ENCODE measurements at regions of chr13 and their contacts with region 1.

Region 1: GRCh38 chr13:75635828-75636435 is at the start of gene LMO7:
- DNase-seq: peak; percentile 48
- ATAC-seq: peak; percentile 76
- H3K4me3 ChIP-seq: peak within 1 kb of the TSS; percentile 63 to 85 (median 84)
- H3K27ac ChIP-seq: peak within 1 kb of the TSS; percentile 24
- H3K4me1 ChIP-seq: peaks cover 36% of the 10 kb centered on the region
- H3K27me3 ChIP-seq: no peaks in the 10 kb centered on the region; a peak in 1 of 5 replicates
- CTCF ChIP-seq: no peak
- EP300 ChIP-seq: no peak
- POLR2A ChIP-seq: peak in 1 of 2 experiments; percentile 68; a peak in 2 of 4 replicates
- RAD21 ChIP-seq: no peak
- total RNA-seq, gene LMO7: 47.7 and 121 TPM in 2 replicates

Region 2: DNA sequence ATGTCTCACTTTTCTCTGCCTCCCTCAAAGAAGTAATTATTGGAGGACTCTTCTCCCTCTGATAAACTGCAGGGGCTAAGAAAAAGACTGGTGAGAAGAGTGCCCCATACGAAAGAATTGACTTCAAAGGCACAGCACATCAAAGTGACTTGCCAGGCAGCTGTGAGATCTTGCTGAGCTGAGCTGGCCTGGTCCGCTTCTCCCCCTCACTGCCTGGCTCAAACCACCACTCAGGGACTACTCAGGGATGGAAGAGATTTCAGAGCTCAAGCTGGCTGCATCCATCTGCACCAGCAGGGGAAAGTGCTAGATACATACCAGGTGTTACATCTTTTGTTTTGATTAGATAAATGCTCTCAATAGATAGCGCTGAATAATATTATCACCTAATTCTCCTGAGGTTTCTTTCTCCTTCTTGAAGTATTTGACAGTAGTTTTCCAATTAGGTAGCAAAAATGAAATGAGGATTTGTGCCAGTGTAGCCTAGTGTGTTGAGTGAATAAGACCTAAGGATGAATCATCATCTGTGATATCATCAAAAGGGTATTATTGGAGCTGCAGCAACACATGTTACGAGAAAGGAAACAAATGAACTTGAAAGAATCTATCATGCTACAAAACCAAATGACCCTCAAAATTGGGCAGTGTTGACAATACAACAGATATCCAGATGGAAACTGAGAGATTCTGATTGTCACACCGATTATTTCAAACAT is 533.8 kb before region 1 on chr13:
- CTCF ChIA-PET with region 1: no interaction called
- POLR2A ChIA-PET with region 1: no interaction called
- in situ Hi-C with region 1: no loop called
- intact Hi-C with region 1: no loop called
- DNase-seq: no peak
- ATAC-seq: no peak
- H3K4me3 ChIP-seq: no peak overlapping the region
- H3K27ac ChIP-seq: no peak overlapping the region
- H3K4me1 ChIP-seq: no peaks in the 10 kb centered on the region
- H3K27me3 ChIP-seq: no peaks in the 10 kb centered on the region
- CTCF ChIP-seq: no peak
- EP300 ChIP-seq: no peak
- POLR2A ChIP-seq: no peak
- RAD21 ChIP-seq: no peak

Region 3: GRCh38 chr13:75566658-75567057 is 69.3 kb before region 1 on chr13:
- CTCF ChIA-PET with region 1: no interaction called
- POLR2A ChIA-PET with region 1: no interaction called
- in situ Hi-C with region 1: no loop called
- intact Hi-C with region 1: loop called (anchors 5 kb)
- DNase-seq: peak; percentile 31
- ATAC-seq: no peak
- H3K4me3 ChIP-seq: no peak overlapping the region
- H3K27ac ChIP-seq: no peak overlapping the region
- H3K4me1 ChIP-seq: no peaks in the 10 kb centered on the region
- H3K27me3 ChIP-seq: no peaks in the 10 kb centered on the region
- CTCF ChIP-seq: peak; percentile 46
- EP300 ChIP-seq: no peak
- POLR2A ChIP-seq: no peak
- RAD21 ChIP-seq: no peak

Region 4: DNA sequence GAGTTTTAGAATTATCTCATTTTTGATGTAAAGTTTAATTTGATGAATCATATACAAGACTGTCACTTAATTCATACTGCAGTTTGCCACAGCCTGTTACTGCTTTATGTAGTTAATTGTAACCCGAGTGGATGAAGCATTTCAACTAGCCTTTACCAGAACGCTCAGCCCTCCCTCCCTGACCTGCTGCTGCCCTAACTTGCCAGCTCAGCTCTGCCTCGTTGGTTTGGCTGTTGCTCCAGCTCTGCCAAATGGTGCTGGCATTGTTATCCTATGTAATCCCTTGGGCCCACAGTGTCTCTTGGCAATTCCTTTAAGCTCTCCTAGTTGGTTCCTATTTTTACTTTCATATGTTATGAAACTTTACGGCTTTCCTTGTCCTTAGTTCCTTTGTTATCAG is 113.5 kb after region 1 on chr13:
- CTCF ChIA-PET with region 1: no interaction called
- POLR2A ChIA-PET with region 1: no interaction called
- in situ Hi-C with region 1: no loop called
- intact Hi-C with region 1: no loop called
- DNase-seq: no peak
- ATAC-seq: no peak
- H3K4me3 ChIP-seq: no peak overlapping the region
- H3K27ac ChIP-seq: no peak overlapping the region
- H3K4me1 ChIP-seq: peaks cover 12% of the 10 kb centered on the region
- H3K27me3 ChIP-seq: no peaks in the 10 kb centered on the region
- CTCF ChIP-seq: no peak
- EP300 ChIP-seq: no peak
- POLR2A ChIP-seq: no peak
- RAD21 ChIP-seq: no peak

Region 5: GRCh38 chr13:76764429-76764828 is 1128.5 kb after region 1 on chr13:
- CTCF ChIA-PET with region 1: no interaction called
- POLR2A ChIA-PET with region 1: no interaction called
- in situ Hi-C with region 1: no loop called
- intact Hi-C with region 1: no loop called
- DNase-seq: no peak
- ATAC-seq: no peak
- H3K4me3 ChIP-seq: no peak overlapping the region
- H3K27ac ChIP-seq: no peak overlapping the region
- H3K4me1 ChIP-seq: no peaks in the 10 kb centered on the region
- H3K27me3 ChIP-seq: no peaks in the 10 kb centered on the region
- CTCF ChIP-seq: no peak
- EP300 ChIP-seq: no peak
- POLR2A ChIP-seq: no peak
- RAD21 ChIP-seq: no peak

Measured in HepG2 (cell line).